Dorsolateral prefrontal cortex (tissue), 120 donors: ENCODE measurements at regions of chr3 and their contacts with region 1.

Region 1: GRCh38 chr3:157136647-157137387 is 23.1 kb downstream of the CCNL1 start:
- DNase-seq: no peak
- H3K4me3 ChIP-seq: peak overlapping the region in 17 of 59 donors; percentile 17 to 63 (median 49)
- H3K27ac ChIP-seq: peak overlapping the region; percentile 60 to 100 (median 96)
- H3K27me3 ChIP-seq: no peaks in the 10 kb centered on the region
- CTCF ChIP-seq: no peak

Region 2: DNA sequence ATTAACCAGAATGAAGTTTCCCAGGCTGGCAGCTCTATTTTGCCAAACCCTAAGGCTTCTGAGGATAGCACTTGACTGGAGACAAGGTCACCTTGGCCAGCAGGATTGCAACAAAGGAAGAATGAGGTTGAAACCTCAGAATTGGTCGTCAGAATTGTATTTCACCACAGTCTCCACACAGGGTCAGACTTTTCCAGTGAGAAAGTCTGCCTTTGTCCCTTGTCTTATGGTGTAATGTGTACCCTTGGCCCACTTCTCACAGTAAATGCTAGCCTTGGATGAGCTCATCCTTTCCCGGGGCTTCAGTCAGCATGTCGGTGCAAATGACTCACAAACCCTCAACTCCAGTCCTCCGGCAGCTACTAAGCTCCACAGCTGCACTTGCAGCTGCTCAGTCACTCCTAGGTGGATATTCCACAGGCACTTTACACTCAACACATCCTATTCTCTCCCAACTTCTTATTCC is 601.6 kb before region 1 on chr3:
- intact Hi-C with region 1: loop called (anchors 5 kb)
- DNase-seq: peak in 7 of 10 donors; percentile 38 to 87 (median 57)
- H3K4me3 ChIP-seq: no peak overlapping the region
- H3K27ac ChIP-seq: peak overlapping the region in 58 of 59 donors; percentile 13 to 96 (median 80)
- H3K27me3 ChIP-seq: no peaks in the 10 kb centered on the region
- CTCF ChIP-seq: peak in 52 of 56 donors; percentile 9 to 69 (median 46)